Activated CD4-positive, alpha-beta T cell treated with anti-CD3 and anti-CD28 coated beads, Interleukin-2, amount 10 ng/mL, durations not matched to agents 24 days and 14 days (primary cell): ENCODE measurements at regions of chr9 and their contacts with region 1.

Region 1: DNA sequence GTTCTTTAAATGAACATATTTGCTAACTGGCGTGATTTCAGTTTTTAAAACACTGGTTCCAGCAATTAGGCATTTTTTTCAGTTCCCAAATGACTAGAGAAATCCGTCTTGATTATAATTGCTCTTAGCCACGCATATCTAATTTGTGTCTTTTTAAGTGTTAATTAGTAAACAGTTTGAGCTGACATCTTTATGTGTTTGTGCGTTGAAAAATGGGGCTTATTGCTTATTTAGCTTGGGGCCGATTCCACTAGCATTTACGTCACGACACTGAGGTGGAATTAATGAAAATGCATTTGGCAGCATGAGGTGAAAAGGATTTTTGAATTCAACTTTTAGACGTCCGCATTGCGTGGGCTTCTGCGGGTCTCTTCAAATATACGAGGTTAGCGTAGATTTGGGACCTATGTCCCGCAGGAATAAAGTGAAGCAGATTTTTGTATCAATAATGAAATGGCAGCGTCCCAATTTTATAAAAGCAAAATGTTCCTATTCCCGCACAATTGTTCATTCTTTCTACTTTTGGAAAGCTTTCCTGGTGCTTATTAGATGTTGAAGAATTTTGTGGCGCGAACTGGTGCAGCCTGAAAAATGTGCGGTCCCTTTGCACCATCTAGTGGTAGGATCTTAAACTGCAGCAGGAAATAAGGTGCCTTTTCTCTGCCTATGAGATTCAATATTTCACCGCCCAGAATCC is 122.7 kb upstream of the LMX1B start:
- DNase-seq: peak; percentile 89
- H3K4me3 Mint-ChIP-seq: no peak overlapping the region
- H3K27ac Mint-ChIP-seq: no peak overlapping the region
- H3K4me1 Mint-ChIP-seq: no peaks in the 10 kb centered on the region
- H3K27me3 Mint-ChIP-seq: peaks cover 25% of the 10 kb centered on the region

Region 2: DNA sequence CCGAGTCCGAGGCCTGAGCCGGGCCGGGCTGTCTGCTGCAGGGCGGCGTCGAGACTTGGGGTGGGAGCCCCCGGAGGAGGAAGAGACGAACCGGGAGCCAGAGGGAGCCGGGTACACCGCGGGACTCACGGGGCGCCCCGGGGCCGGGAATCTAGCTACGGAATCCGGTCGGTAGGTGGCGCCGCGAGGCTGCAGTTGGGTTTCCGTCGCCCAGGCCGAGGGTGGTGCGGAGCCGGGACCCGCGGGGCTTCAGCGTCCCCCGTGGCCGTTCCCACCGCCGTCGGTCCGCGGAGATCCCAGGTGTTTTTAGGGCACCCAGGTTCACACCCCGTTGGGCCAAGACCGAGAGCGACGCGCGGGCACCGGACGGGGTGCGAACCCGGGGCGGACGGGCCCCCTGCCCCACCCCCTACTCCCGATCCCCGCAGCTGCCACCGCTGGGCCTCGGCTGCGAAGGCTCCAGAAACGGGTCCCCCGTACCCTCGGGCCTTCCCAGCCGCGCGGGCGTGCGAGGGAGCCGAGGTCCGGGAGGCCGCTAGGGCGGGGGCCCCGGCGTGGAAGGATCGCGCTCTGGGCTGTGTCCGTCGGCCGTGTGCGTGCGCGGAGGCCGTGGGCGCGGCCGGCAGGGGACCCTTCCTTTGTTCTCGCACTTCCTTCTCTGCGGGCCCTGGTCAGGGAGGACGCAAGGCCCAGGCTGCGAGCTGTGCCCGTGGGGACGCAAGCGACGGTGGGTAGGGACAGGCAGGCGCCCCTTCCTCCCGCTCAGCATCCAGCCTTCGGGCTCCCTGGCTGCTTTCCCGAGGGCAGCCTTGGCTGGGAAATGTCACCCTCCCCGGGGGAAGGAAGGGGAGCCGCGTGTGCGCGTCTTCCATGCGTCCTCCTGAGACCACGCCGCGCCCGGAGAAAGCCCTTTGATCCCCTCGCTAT is 1082.8 kb before region 1 on chr9:
- intact Hi-C with region 1: loop called (anchors 1 kb)
- DNase-seq: peak; percentile 93
- H3K4me3 Mint-ChIP-seq: peak overlapping the region; percentile 80
- H3K27ac Mint-ChIP-seq: no peak overlapping the region
- H3K4me1 Mint-ChIP-seq: peaks cover 10% of the 10 kb centered on the region
- H3K27me3 Mint-ChIP-seq: peaks cover 14% of the 10 kb centered on the region

Region 3: DNA sequence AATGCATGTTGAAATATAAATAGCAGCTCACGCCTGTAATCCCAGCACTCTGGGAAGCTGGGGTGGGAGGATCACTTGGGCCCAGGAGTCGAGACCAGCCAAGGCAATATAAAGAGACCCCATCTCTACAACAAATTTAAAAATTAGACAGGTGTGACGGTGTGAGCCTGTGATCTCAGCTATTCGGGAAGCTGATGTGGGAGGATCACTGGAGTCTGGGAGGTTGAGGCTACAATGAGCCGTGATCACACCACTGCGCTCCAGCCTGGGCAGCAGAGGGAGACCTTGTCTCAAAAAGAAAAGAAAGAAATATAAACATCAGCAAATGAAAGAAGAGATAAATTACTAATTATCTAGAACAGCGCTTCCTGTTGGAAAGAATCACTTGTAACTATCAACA is 889.1 kb before region 1 on chr9:
- intact Hi-C with region 1: no loop called
- DNase-seq: no peak
- H3K4me3 Mint-ChIP-seq: no peak overlapping the region
- H3K27ac Mint-ChIP-seq: no peak overlapping the region
- H3K4me1 Mint-ChIP-seq: peaks cover 2% of the 10 kb centered on the region
- H3K27me3 Mint-ChIP-seq: no peaks in the 10 kb centered on the region

Region 4: DNA sequence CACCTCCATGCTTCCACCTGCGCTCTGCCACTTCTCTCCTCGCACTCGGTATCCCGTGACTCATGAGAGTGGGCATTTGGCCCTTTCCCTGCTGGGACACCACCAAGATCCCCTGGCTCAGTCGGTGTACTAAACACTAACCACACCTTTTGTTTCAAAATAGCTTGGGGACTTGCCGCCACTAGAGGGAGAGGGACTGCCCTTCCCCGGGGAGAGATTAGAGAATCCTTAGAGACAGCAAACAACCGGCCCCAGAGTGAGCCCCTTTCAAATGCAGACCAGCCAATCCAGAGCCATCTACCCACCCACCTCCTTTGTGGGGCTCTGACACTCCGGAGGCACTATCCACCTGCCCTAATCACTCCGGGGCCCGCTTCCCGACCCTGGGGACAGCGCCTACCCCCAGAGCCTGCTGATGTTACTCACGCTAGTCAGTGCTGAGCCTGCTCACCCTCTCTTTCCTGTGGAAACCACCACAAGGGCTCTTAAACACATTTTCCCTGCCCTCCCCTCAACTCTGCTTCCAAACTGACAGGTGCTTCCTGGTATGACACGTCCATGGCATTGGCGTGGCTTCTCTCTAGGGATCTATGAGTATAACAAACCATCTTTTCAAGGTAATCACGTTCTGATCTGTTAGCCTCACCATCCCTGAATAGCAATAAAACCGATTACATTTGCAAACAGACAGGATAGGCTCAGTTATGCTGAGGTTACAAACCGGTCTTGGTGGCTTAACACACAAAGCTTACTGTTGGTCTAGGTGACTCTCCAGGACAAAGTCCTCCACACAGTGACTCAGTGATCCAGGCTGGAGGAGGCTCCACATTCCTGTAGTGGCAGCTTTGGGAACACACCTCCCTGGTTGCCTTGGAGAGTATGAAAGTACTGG is 344.5 kb before region 1 on chr9:
- intact Hi-C with region 1: loop called (anchors 5 kb)
- DNase-seq: peak; percentile 67
- H3K4me3 Mint-ChIP-seq: peak overlapping the region; percentile 9
- H3K27ac Mint-ChIP-seq: no peak overlapping the region
- H3K4me1 Mint-ChIP-seq: peaks cover 7% of the 10 kb centered on the region
- H3K27me3 Mint-ChIP-seq: peaks cover 29% of the 10 kb centered on the region

Region 5: GRCh38 chr9:126228781-126229444 is 262.1 kb before region 1 on chr9:
- intact Hi-C with region 1: loop called (anchors 2 kb)
- DNase-seq: peak; percentile 90
- H3K4me3 Mint-ChIP-seq: no peak overlapping the region
- H3K27ac Mint-ChIP-seq: no peak overlapping the region
- H3K4me1 Mint-ChIP-seq: peaks cover 3% of the 10 kb centered on the region
- H3K27me3 Mint-ChIP-seq: peaks cover 24% of the 10 kb centered on the region

Region 6: GRCh38 chr9:126301985-126302603 is 188.9 kb before region 1 on chr9:
- intact Hi-C with region 1: loop called (anchors 1 kb)
- DNase-seq: peak; percentile 88
- H3K4me3 Mint-ChIP-seq: no peak overlapping the region
- H3K27ac Mint-ChIP-seq: no peak overlapping the region
- H3K4me1 Mint-ChIP-seq: peaks cover 2% of the 10 kb centered on the region
- H3K27me3 Mint-ChIP-seq: peaks cover 8% of the 10 kb centered on the region